ENCODE measurements at regions of chr4 and their contacts with region 1.

Region 1: GRCh38 chr4:33649015-33649414 is 2595.3 kb downstream of the ARAP2 start:
- DNase-seq: no peak
- H3K4me3 ChIP-seq: no peak overlapping the region
- H3K27ac ChIP-seq: no peak overlapping the region
- H3K4me1 ChIP-seq: no peaks in the 10 kb centered on the region
- H3K27me3 ChIP-seq: no peaks in the 10 kb centered on the region
- CTCF ChIP-seq: peak; percentile 53

Region 2: GRCh38 chr4:33407496-33407895 is 241.5 kb before region 1 on chr4:
- CTCF ChIA-PET with region 1: no interaction called
- POLR2A ChIA-PET with region 1: no interaction called
- intact Hi-C with region 1: no loop called
- DNase-seq: peak; percentile 1 to 36
- H3K4me3 ChIP-seq: no peak overlapping the region
- H3K27ac ChIP-seq: no peak overlapping the region
- H3K4me1 ChIP-seq: no peaks in the 10 kb centered on the region
- H3K27me3 ChIP-seq: no peaks in the 10 kb centered on the region
- CTCF ChIP-seq: no peak

Region 3: GRCh38 chr4:34720571-34720970 is 1071.6 kb after region 1 on chr4:
- CTCF ChIA-PET with region 1: no interaction called
- POLR2A ChIA-PET with region 1: no interaction called
- intact Hi-C with region 1: loop called (anchors 1 kb)
- DNase-seq: no peak
- H3K4me3 ChIP-seq: no peak overlapping the region
- H3K27ac ChIP-seq: no peak overlapping the region
- H3K4me1 ChIP-seq: no peaks in the 10 kb centered on the region
- H3K27me3 ChIP-seq: no peaks in the 10 kb centered on the region
- CTCF ChIP-seq: peak; percentile 69

Measured in PC-9 (cell line).